Heart left ventricle (tissue), 16 donors: ENCODE measurements at regions of chr1 and their contacts with region 1.

Region 1: DNA sequence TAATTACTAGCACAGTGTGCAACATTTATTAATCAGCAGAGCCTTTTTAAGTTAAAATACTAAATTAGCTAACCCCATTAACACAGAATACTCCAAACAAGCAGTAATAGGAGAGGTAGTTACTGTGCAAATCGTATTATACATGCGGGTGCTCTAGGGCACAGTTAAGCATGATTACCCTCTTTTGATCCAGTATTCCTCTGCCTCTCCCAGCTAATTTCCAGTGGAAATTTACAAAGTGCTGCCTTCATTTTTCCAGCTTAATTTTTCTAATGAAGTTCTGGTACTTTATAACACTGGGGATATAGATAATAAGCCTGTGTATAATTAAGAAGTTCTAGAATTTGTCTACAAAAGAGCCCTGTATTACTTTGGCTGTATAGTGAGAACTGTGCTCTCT is 159.9 kb downstream of the SPATA17 start:
- DNase-seq: no peak
- ATAC-seq: no peak
- H3K4me3 ChIP-seq: no peak overlapping the region
- H3K27ac ChIP-seq: no peak overlapping the region
- H3K4me1 ChIP-seq: no peaks in the 10 kb centered on the region
- H3K27me3 ChIP-seq: no peaks in the 10 kb centered on the region
- CTCF ChIP-seq: no peak
- POLR2A ChIP-seq: no peak

Region 2: DNA sequence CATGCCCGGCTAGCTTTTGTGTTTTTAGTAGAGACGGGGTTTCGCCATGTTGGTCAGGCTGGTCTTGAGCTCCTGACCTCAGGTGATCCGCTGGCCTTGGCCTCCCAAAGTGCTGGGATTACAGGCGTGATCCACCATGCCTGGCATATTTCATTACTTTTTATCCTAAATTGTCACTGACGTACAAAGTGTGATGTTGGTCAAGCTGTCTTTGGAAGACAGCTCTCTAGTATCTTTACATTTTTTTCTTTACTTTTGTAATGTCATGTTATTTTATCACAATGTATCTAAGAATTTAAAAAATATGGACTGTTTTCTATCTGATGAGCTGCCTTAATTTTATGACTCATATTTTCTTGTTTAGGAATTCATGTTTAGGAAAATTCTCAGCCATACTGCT is 87.8 kb before region 1 on chr1:
- intact Hi-C with region 1: no loop called
- DNase-seq: no peak
- ATAC-seq: no peak
- H3K4me3 ChIP-seq: no peak overlapping the region
- H3K27ac ChIP-seq: no peak overlapping the region
- H3K4me1 ChIP-seq: no peaks in the 10 kb centered on the region
- H3K27me3 ChIP-seq: no peaks in the 10 kb centered on the region
- CTCF ChIP-seq: no peak
- POLR2A ChIP-seq: no peak

Region 3: GRCh38 chr1:217805787-217806186 is 14.7 kb after region 1 on chr1:
- intact Hi-C with region 1: loop called in 1 of 10 experiments (anchors 1 kb)
- DNase-seq: no peak
- ATAC-seq: no peak
- H3K4me3 ChIP-seq: no peak overlapping the region
- H3K27ac ChIP-seq: no peak overlapping the region
- H3K4me1 ChIP-seq: no peaks in the 10 kb centered on the region
- H3K27me3 ChIP-seq: no peaks in the 10 kb centered on the region
- CTCF ChIP-seq: no peak
- POLR2A ChIP-seq: no peak